ENCODE measurements at regions of chr18 and their contacts with region 1.

Region 1: DNA sequence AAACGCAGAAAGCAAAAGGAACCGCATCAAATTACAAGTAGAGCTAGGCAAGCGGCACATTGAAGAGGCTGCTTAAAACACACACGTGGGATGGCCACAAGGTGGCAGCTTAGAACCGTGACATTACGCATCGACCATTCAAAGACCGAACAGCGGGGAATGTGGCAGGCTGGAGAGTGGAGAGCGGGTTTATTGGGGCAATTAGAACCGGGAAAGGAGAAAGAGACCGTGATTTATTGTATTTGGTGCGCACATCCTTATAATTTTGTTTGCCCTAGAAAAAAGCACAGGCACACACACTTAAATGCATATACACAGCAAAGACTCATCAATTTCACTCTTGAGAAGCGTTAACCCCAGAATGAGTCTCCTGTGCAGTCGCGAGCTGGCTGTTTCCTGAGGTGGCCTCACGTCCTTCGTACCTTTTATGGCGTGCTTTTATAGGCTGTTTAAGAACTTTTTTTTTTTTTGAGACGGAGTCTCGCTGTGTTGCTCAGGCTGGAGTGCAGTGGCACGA is 31.7 kb upstream of the MEP1B start:
- DNase-seq: peak; percentile 80
- H3K4me3 Mint-ChIP-seq: peak overlapping the region; percentile 49
- H3K27ac Mint-ChIP-seq: peak overlapping the region; percentile 3
- H3K4me1 Mint-ChIP-seq: peaks cover 6% of the 10 kb centered on the region
- H3K27me3 Mint-ChIP-seq: peaks cover 12% of the 10 kb centered on the region

Region 2: DNA sequence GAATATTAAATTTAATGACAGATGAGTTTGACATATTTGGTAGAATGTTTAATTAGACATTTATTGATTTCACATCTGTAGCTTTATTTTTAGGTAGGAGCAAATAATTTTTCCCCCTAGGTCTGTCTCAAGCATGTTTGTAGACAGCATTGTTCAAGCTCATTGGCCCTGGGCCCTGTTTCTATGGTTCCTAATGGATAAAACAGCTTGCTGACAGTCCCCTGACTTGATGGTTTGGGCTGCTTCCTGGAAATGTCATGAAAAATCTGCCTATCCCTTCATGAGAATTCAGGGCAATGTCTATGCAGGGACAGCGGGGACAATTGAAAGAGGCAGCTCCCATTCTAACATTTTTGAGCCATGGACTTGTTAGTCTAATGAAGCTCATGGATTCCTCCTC is 17.1 kb after region 1 on chr18:
- CTCF ChIA-PET with region 1: interaction called, 11 read pairs
- POLR2A ChIA-PET with region 1: no interaction called
- intact Hi-C with region 1: no loop called
- DNase-seq: no peak
- H3K4me3 Mint-ChIP-seq: no peak overlapping the region
- H3K27ac Mint-ChIP-seq: no peak overlapping the region
- H3K4me1 Mint-ChIP-seq: no peaks in the 10 kb centered on the region
- H3K27me3 Mint-ChIP-seq: no peaks in the 10 kb centered on the region

Region 3: GRCh38 chr18:32271672-32272208 is 113.6 kb after region 1 on chr18:
- CTCF ChIA-PET with region 1: interaction called, 16 read pairs
- POLR2A ChIA-PET with region 1: no interaction called
- intact Hi-C with region 1: no loop called
- DNase-seq: peak; percentile 27
- H3K4me3 Mint-ChIP-seq: no peak overlapping the region
- H3K27ac Mint-ChIP-seq: no peak overlapping the region
- H3K4me1 Mint-ChIP-seq: no peaks in the 10 kb centered on the region
- H3K27me3 Mint-ChIP-seq: no peaks in the 10 kb centered on the region

Region 4: DNA sequence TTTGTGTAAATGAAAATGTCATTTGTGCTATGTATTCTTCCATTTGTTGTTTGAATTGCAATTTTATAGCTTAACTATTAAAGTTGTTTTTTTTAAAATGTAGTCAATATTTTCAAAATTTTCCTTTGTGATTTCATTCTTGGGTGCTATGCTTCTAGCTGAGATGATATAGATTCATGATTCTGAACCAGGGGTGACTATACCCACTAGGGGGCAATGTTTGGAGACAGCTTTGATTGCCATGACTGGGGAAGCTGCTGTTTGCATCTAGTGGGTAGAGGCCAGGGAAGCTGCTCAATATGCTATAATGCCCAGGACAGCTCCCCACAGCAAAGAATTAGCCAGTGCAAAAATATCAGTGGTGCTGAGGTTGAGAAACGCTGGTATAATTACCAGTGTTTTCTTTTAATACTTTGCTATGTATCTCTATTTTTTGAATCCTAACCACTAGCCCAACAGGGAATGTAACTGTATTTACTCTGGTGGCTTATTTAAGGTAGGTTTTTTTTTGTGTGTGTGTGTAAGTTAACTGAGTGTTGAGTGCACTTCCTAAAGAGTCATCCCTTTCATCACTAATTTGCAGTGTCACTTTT is 131.4 kb after region 1 on chr18:
- CTCF ChIA-PET with region 1: interaction called, 9 read pairs
- POLR2A ChIA-PET with region 1: no interaction called
- intact Hi-C with region 1: loop called (anchors 1 kb)
- DNase-seq: peak; percentile 38
- H3K4me3 Mint-ChIP-seq: no peak overlapping the region
- H3K27ac Mint-ChIP-seq: no peak overlapping the region
- H3K4me1 Mint-ChIP-seq: no peaks in the 10 kb centered on the region
- H3K27me3 Mint-ChIP-seq: peaks cover 9% of the 10 kb centered on the region

Region 5: DNA sequence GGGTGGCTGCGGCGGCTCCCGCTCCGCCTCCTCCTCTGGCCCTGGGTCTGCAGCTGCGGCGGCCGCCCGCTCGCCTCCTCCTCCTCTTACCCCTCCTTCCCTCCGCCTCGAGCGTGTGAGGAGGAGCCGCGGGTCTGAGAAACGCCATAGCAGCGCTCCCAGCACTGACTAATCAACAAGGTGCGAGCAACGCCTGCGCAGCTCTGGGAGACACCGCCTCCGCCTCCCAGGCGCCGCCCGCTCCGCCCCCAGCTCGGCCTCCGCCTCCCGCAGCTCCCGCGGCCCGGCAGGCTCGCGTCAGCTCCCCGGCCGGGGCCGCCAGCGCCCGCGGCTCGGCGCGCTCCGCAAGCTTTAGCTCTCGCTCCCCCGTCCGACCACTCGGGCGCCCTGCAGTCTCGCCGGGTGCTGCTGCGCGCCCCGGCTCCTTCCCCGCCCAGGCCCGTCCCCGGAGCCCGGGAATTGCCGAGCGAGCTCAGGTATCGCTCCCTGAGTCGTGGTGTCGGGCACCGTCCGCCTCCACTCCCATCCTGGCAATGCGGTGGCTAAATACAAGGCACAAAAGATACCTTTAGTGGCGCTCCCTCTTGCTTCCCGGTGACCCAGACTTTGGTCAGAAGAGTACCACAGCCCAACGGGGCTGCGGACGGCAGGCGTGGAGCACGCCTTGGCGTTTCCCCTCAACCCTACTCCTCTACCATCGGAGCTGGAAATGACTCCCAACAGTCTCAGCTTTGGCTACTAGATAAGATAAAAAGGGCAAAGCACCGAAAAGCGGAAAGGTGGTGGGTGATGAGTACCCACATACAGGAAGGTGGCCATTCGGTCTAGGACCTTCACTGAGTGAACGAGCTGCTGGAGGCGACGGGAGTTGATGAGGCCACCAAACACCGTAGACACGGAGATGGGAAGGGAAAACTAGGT is 312.8 kb after region 1 on chr18 and contains the start of gene GAREM1:
- CTCF ChIA-PET with region 1: interaction called, 21 read pairs
- POLR2A ChIA-PET with region 1: no interaction called
- intact Hi-C with region 1: loop called (anchors 1 kb)
- DNase-seq: peak; percentile 85
- H3K4me3 Mint-ChIP-seq: peak within 1 kb of the TSS; percentile 65
- H3K27ac Mint-ChIP-seq: no peak within 1 kb of the TSS
- H3K4me1 Mint-ChIP-seq: peaks cover 28% of the 10 kb centered on the region
- H3K27me3 Mint-ChIP-seq: peaks cover 46% of the 10 kb centered on the region
- total RNA-seq, gene GAREM1: 0.05 TPM in 1 of 2 experiments, not detected in the other

Region 6: GRCh38 chr18:32530947-32531651 is 372.9 kb after region 1 on chr18:
- CTCF ChIA-PET with region 1: interaction called, 3 read pairs
- POLR2A ChIA-PET with region 1: no interaction called
- intact Hi-C with region 1: loop called (anchors 1 kb)
- DNase-seq: peak; percentile 16
- H3K4me3 Mint-ChIP-seq: no peak overlapping the region
- H3K27ac Mint-ChIP-seq: no peak overlapping the region
- H3K4me1 Mint-ChIP-seq: peaks cover 12% of the 10 kb centered on the region
- H3K27me3 Mint-ChIP-seq: peaks cover 5% of the 10 kb centered on the region

Region 7: GRCh38 chr18:32552421-32553030 is 394.4 kb after region 1 on chr18:
- CTCF ChIA-PET with region 1: interaction called, 144 read pairs
- POLR2A ChIA-PET with region 1: no interaction called
- intact Hi-C with region 1: loop called (anchors 1 kb)
- DNase-seq: peak; percentile 53
- H3K4me3 Mint-ChIP-seq: no peak overlapping the region
- H3K27ac Mint-ChIP-seq: no peak overlapping the region
- H3K4me1 Mint-ChIP-seq: no peaks in the 10 kb centered on the region
- H3K27me3 Mint-ChIP-seq: peaks cover 1% of the 10 kb centered on the region

Region 8: GRCh38 chr18:32742579-32742978 is 584.4 kb after region 1 on chr18:
- CTCF ChIA-PET with region 1: no interaction called
- POLR2A ChIA-PET with region 1: no interaction called
- intact Hi-C with region 1: no loop called
- DNase-seq: no peak
- H3K4me3 Mint-ChIP-seq: no peak overlapping the region
- H3K27ac Mint-ChIP-seq: no peak overlapping the region
- H3K4me1 Mint-ChIP-seq: no peaks in the 10 kb centered on the region
- H3K27me3 Mint-ChIP-seq: no peaks in the 10 kb centered on the region